Posterior cingulate gyrus (tissue), 11 donors: ENCODE measurements at regions of chr7 and their contacts with region 1.

Region 1: GRCh38 chr7:16918288-16918895 is 36.6 kb upstream of the AGR3 start:
- DNase-seq: peak in 1 of 10 donors; percentile 14

Region 2: DNA sequence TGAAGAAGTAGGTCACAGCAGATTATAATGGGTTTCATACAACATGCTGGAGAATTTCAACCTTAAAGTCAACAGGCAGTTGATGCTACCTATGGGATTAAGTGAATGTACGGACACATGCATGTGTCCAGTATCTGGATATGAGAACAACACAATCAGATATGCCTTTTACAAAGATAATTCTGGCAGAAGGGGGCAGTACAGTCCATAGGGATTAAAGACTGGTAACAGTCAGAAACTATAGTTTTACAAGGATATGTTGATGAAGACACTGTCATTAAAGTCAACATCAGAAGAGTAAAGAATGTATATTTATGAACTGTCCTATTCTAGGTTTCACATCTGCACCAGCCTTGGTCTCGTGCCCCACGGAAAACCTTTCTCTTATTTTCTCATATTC is 314.3 kb before region 1 on chr7:
- intact Hi-C with region 1: loop called (anchors 2 kb)
- DNase-seq: no peak

Region 3: GRCh38 chr7:16695621-16696237 is 222.7 kb before region 1 on chr7:
- intact Hi-C with region 1: loop called (anchors 10 kb)
- DNase-seq: no peak

Region 4: DNA sequence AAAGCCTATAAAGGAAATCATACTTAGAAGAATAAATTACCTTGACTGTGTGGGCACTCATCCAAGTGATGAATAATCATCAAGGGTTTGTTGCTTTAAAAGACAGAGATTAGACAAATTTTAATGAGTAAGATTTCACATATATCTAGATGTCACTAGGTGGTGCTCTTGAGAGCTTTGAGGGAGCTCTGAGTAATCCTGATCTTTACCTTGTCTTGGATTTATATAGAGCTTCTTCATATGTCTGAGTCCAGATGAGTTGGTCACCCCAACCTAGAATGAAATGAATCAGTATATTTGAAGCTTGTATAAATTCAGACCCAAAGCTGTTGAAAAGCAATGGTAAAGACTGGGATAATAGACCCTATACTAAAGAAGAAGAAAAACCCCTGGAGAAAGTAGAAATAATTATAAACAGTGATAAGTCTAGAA is 117.3 kb before region 1 on chr7:
- intact Hi-C with region 1: loop called (anchors 5 kb)
- DNase-seq: no peak